K562 (cell line): ENCODE measurements at regions of chrX and their contacts with region 1.

Region 1: GRCh38 chrX:129726307-129727111 is 12.3 kb upstream of the XPNPEP2 start:
- DNase-seq: peak; percentile 38 to 61 (median 48)
- ATAC-seq: peak; percentile 91
- H3K4me3 ChIP-seq: no peak overlapping the region
- H3K27ac ChIP-seq: no peak overlapping the region
- H3K4me1 ChIP-seq: peaks cover 0 to 6% of the 10 kb centered on the region in 2 experiments; a peak in 2 of 5 replicates
- H3K27me3 ChIP-seq: peaks cover 0 to 4% of the 10 kb centered on the region in 2 experiments; a peak in 2 of 5 replicates
- CTCF ChIP-seq: peak; percentile 72 to 80 (median 74)
- EP300 ChIP-seq: no peak
- POLR2A ChIP-seq: no peak
- RAD21 ChIP-seq: peak; percentile 77 to 87

Region 2: DNA sequence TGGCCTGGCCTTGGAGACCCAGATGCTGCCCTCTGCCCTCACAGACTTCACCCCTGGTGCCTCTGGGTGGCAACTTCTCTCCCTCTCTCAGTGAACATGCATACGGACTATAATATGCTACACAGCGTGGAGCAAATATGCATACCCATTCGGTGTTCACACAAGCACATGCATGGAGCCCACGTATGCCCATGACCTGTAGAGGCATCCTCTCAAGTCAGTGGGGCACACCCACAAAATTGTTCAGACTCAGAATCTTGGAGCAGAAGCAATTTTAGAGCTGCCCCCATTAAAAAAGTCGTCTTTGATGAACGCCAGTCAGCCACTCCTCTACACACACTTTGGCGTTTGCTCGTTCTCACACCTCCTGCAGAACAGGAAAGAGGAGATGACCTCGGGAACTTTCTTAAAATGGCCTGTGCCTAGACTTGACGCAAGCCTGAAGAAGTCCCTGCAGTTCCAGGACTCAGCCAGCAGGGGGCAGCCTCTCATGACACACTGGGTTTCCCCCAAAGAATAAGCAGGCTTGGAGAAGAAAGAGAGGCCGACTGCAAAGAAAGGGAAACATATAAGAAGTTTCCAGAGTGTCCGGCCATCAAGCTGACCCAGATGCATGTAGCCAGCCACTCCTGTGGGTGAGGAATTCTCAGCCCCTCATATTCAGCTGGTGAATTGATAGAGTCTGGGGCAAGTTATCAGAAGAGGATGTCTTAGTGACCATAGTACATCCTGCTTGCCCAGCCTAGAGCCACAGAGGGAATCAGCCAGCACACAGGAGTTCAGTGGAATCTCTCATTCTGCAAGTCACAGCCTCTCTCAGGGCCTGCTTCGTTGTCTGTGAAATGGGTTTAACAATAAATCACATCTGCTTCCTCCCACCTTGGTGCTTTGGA is 89.0 kb before region 1 on chrX:
- CTCF ChIA-PET with region 1: interaction called, 4 read pairs
- POLR2A ChIA-PET with region 1: no interaction called
- in situ Hi-C with region 1: no loop called
- intact Hi-C with region 1: loop called (anchors 1 kb)
- DNase-seq: peak; percentile 60 to 81 (median 67)
- ATAC-seq: peak; percentile 80
- H3K4me3 ChIP-seq: no peak overlapping the region
- H3K27ac ChIP-seq: no peak overlapping the region
- H3K4me1 ChIP-seq: peaks cover 14 to 19% of the 10 kb centered on the region in 2 experiments
- H3K27me3 ChIP-seq: peaks cover 0 to 4% of the 10 kb centered on the region in 2 experiments; a peak in 2 of 5 replicates
- CTCF ChIP-seq: peak; percentile 77 to 91 (median 86)
- EP300 ChIP-seq: no peak
- POLR2A ChIP-seq: no peak
- RAD21 ChIP-seq: peak; percentile 45 to 74; a peak in 3 of 4 replicates

Region 3: GRCh38 chrX:129654419-129655165 is 71.9 kb before region 1 on chrX and contains the start of gene APLN:
- CTCF ChIA-PET with region 1: no interaction called
- POLR2A ChIA-PET with region 1: no interaction called
- in situ Hi-C with region 1: no loop called
- intact Hi-C with region 1: loop called (anchors 5 kb)
- DNase-seq: peak in 3 of 4 experiments; percentile 26 to 38 (median 37)
- ATAC-seq: peak; percentile 87
- H3K4me3 ChIP-seq: peak within 1 kb of the TSS; percentile 26; the same call in 1 of the 2 replicates
- H3K27ac ChIP-seq: no peak within 1 kb of the TSS
- H3K4me1 ChIP-seq: peaks cover 0 to 17% of the 10 kb centered on the region in 2 experiments; a peak in 2 of 5 replicates
- H3K27me3 ChIP-seq: peaks cover 24 to 65% of the 10 kb centered on the region in 2 experiments
- CTCF ChIP-seq: no peak
- EP300 ChIP-seq: no peak
- POLR2A ChIP-seq: no peak
- RAD21 ChIP-seq: no peak
- polyA plus RNA-seq, gene APLN: not detected

Region 4: DNA sequence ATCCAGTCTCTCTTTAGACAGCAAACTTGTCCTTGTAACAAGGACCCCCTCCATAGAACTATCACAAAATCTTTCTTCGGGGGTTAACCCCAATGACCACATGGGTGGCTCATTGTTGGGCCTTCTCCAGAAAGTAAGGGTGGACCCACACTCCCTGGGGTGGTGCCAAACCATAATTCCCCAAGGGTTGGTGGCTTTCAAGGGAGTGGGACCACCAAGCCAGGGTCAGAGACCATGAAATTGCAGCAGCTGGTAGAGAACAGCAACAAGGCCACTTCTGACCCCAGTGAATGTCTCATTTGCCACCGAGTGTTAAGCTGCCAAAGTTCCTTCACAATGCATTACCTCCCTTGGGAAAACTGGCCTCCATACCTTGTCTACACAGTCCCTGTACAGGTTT is 146.0 kb after region 1 on chrX:
- CTCF ChIA-PET with region 1: no interaction called
- POLR2A ChIA-PET with region 1: no interaction called
- in situ Hi-C with region 1: no loop called
- intact Hi-C with region 1: no loop called
- DNase-seq: no peak
- ATAC-seq: no peak
- H3K4me3 ChIP-seq: no peak overlapping the region
- H3K27ac ChIP-seq: no peak overlapping the region
- H3K4me1 ChIP-seq: no peaks in the 10 kb centered on the region
- H3K27me3 ChIP-seq: peaks cover 4 to 14% of the 10 kb centered on the region in 2 experiments; a peak in 3 of 5 replicates
- CTCF ChIP-seq: no peak
- EP300 ChIP-seq: no peak
- POLR2A ChIP-seq: no peak
- RAD21 ChIP-seq: no peak